MCF 10A (cell line): ENCODE measurements at regions of chr6 and their contacts with region 1.

Region 1: DNA sequence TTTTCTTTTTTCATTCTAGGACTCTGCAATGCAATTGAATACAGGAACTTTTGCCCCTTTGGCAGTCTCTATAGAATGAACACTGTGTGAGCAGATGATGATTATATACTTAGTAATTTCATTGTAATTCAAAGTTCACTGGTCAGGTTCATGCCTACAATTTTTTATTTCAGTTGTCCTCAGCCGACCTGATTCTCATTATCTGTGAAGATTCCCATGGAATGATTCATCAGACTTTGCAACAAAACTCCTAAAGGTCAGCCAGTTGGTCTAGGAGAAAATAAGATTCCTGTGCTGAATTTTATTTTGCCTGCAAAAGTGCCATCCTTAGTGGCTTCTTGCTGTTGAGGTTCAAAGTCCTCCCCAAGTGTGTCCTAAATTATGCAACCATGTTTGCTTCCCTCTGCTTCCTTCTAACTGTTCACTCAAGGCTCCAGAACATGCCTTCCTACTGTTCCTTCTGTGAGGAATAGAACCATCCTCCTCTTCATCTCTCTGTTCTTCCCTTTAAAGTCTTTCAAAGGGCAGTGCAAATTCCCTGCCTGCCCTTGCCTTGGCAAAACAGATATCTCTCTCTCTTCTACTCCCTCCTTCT is 194.2 kb upstream of the CNR1 start:
- DNase-seq: peak; percentile 74
- H3K4me3 Mint-ChIP-seq: no peak overlapping the region
- H3K27ac Mint-ChIP-seq: peak overlapping the region; percentile 75
- H3K4me1 Mint-ChIP-seq: peaks cover 29% of the 10 kb centered on the region
- H3K27me3 Mint-ChIP-seq: no peaks in the 10 kb centered on the region
- CTCF ChIP-seq: no peak

Region 2: GRCh38 chr6:88698661-88699060 is 338.4 kb after region 1 on chr6:
- CTCF ChIA-PET with region 1: no interaction called
- POLR2A ChIA-PET with region 1: no interaction called
- intact Hi-C with region 1: loop called (anchors 2 kb)
- DNase-seq: no peak
- H3K4me3 Mint-ChIP-seq: no peak overlapping the region
- H3K27ac Mint-ChIP-seq: no peak overlapping the region
- H3K4me1 Mint-ChIP-seq: no peaks in the 10 kb centered on the region
- H3K27me3 Mint-ChIP-seq: no peaks in the 10 kb centered on the region
- CTCF ChIP-seq: no peak